ENCODE measurements at regions of chr11 and their contacts with region 1.

Region 1: DNA sequence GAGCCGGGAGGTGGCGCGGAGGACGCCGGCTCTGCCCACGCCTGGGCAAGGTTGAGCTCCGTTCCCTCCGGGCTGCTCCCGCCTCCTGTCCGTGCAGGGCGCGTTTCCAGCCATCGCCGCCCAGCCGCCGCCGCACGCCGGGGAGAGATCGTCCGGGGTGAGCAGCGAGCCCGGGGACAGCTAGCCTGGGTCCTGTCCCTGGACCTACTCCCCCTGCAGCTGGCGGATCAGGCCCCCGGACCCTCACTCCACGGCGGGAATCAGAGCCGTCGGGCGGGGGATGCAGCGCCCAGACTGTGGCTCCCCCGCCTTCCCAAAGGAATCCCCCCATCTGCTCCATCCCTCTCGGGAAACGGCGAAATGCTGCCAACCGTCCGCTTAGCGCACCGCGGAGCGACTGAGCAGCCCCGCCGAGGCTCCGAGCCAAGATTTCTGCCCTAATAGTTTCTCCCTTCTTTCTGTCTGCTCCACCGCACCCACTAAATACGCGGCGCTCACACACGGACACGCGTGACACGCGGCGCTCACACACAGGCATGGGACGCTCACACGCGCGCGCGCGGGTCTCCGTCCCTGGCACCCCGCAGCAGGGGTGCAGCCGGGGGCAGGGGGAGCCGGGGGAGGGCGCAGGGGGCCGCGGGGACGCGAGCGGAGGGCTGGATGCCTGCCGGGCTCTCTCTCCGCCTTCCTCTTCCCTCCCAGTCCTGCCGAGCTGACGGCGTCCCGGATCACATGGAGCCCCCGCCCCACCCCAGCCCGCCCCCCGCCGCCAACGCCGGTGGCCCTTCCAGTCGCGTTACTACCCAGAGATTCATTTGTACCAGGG is at the start of gene KCNJ5:
- DNase-seq: no peak
- ATAC-seq: peak; percentile 11
- H3K4me3 Mint-ChIP-seq: peak within 1 kb of the TSS; percentile 61
- H3K27ac Mint-ChIP-seq: no peak within 1 kb of the TSS
- H3K4me1 Mint-ChIP-seq: peaks cover 6% of the 10 kb centered on the region
- H3K27me3 Mint-ChIP-seq: peaks cover 55% of the 10 kb centered on the region
- CTCF ChIP-seq: no peak
- total RNA-seq, gene KCNJ5: not detected

Region 2: GRCh38 chr11:128716661-128717210 is 174.0 kb before region 1 on chr11:
- CTCF ChIA-PET with region 1: no interaction called
- POLR2A ChIA-PET with region 1: no interaction called
- intact Hi-C with region 1: no loop called
- DNase-seq: peak; percentile 75
- ATAC-seq: peak; percentile 68
- H3K4me3 Mint-ChIP-seq: peak overlapping the region; percentile 67
- H3K27ac Mint-ChIP-seq: peak overlapping the region; percentile 97
- H3K4me1 Mint-ChIP-seq: peaks cover 92% of the 10 kb centered on the region
- H3K27me3 Mint-ChIP-seq: no peaks in the 10 kb centered on the region
- CTCF ChIP-seq: no peak

Region 3: DNA sequence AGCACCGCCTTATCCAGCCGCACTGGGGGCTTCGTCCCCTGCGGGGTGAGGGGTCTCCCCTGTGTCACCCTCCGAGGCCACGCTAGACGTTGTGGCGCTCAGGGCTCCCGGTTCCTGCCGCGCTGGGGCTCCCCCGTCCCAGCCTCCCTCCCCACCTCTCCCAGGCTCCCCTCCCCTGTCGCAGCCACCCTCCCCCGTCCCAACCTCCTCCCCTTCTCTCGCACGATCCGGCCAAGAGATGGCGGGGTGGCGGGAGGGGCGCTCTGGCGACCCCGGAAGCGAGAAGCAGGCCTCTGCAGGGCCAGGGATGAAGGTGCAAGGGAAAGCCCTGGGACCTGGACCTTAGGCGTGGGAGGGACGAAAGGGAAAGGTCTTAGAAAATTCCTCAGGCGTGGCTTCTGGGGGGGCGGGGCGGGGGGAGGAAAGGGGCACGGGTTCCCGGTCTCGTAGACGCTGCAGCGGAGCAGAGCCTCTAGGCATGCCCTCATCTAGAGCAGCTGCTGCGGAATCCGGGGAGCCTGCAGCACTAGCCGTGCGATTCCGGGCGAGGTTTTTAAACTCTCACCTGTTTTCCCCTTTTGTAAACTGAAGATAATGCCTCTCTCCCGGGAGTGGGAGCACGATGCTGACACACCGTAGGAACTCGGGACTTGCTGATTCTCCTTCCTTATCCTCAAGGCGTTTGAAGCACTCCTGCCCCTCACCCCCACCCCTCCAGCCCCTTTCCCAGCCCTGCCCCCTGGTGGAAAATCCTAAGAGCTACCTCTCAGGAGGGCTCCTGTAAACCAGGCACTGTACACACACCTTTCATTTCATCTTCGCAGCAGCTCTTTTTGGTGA is 14.8 kb after region 1 on chr11:
- CTCF ChIA-PET with region 1: interaction called, 123 read pairs
- POLR2A ChIA-PET with region 1: no interaction called
- intact Hi-C with region 1: no loop called
- DNase-seq: peak; percentile 48
- ATAC-seq: peak; percentile 75
- H3K4me3 Mint-ChIP-seq: peak overlapping the region; percentile 68
- H3K27ac Mint-ChIP-seq: no peak overlapping the region
- H3K4me1 Mint-ChIP-seq: peaks cover 12% of the 10 kb centered on the region
- H3K27me3 Mint-ChIP-seq: peaks cover 27% of the 10 kb centered on the region
- CTCF ChIP-seq: peak; percentile 44

Region 4: DNA sequence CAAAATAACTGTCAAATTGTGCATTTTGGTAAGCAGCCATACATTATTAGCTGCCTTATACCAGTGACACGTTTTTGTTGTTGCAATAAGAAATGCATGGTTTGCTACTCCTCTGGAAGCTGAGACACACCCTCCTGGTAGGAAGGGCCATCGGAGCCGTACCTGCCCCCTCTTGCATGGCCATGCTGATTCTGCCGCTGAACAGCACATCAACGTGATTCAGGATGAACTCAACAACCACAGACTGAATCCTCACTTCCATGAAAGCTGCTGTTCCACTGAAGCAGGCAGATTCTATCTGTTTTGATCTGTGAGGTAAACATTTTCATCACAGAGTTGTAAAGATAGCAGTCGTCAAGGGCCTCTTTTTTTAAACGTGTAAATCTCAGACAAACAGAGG is 90.5 kb after region 1 on chr11:
- CTCF ChIA-PET with region 1: no interaction called
- POLR2A ChIA-PET with region 1: no interaction called
- intact Hi-C with region 1: no loop called
- DNase-seq: no peak
- ATAC-seq: no peak
- H3K4me3 Mint-ChIP-seq: no peak overlapping the region
- H3K27ac Mint-ChIP-seq: no peak overlapping the region
- H3K4me1 Mint-ChIP-seq: no peaks in the 10 kb centered on the region
- H3K27me3 Mint-ChIP-seq: no peaks in the 10 kb centered on the region
- CTCF ChIP-seq: no peak